ENCODE measurements at regions of chr10 and their contacts with region 1.

Region 1: DNA sequence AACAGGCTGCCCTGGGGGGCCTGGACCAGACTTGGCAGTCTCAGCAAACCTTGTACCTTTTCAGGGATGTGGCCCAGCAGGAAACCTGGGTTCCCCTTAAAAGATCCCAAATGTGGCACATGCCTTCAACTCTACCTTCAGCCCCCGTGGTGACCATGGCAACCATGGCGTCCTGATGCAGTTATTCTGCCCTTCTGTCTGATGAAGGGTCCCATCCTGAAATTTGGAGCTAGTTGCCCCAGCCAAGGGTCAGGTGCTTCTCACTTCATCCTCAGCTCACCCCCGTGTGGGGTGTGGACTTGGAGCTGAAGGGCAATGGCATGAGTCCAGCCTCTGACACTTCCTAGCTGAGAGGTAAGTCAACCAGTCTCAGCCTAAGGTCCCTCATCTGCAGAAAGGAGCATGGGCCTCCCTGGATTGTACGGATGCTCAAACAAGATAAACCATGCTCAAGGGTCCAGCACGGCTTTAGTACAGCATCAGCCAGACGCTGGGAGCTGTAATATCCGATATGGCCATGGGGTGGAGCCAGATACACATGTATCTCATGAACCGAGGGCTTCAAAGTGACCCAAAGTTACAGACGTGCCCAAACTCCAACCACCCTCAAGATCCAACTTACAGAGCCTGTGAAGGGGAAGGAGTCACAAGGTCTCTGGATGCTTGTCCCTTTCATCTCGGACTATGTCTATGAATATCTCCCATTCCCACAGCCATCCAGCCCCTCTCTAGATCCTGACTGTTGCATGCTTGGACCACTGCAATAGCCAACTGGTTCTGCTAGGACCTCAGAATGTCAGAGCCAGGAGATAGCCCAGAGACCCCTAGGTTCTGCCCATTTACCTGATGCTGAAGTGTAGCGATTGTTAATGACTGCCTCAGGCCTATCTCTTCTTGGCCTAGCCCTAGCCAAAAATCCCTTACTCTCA is 142.5 kb downstream of the SH3PXD2A start:
- DNase-seq: peak; percentile 53 to 98
- H3K4me3 ChIP-seq: no peak overlapping the region
- H3K27ac ChIP-seq: no peak overlapping the region
- H3K4me1 ChIP-seq: peaks cover 0 to 3% (median 1%) of the 10 kb centered on the region in 4 experiments; a peak in 2 of 7 replicates
- H3K27me3 ChIP-seq: no peaks in the 10 kb centered on the region
- CTCF ChIP-seq: peak; percentile 68 to 96 (median 93)
- EP300 ChIP-seq: no peak
- POLR2A ChIP-seq: no peak
- RAD21 ChIP-seq: peak; percentile 99

Region 2: GRCh38 chr10:103416436-103417147 is 296.2 kb before region 1 on chr10:
- CTCF ChIA-PET with region 1: no interaction called
- POLR2A ChIA-PET with region 1: no interaction called
- DNase-seq: no peak
- H3K4me3 ChIP-seq: no peak overlapping the region
- H3K27ac ChIP-seq: no peak overlapping the region
- H3K4me1 ChIP-seq: no peaks in the 10 kb centered on the region
- H3K27me3 ChIP-seq: no peaks in the 10 kb centered on the region
- CTCF ChIP-seq: peak in 2 of 3 experiments; percentile 27 to 44; a peak in 2 of 4 replicates
- EP300 ChIP-seq: no peak
- POLR2A ChIP-seq: no peak
- RAD21 ChIP-seq: peak; percentile 45 to 51

Region 3: GRCh38 chr10:103598654-103599115 is 114.1 kb before region 1 on chr10:
- CTCF ChIA-PET with region 1: interaction called, 21 read pairs
- POLR2A ChIA-PET with region 1: no interaction called
- DNase-seq: peak; percentile 31 to 81
- H3K4me3 ChIP-seq: no peak overlapping the region
- H3K27ac ChIP-seq: no peak overlapping the region
- H3K4me1 ChIP-seq: peaks cover 0 to 4% (median 1%) of the 10 kb centered on the region in 4 experiments; a peak in 3 of 7 replicates
- H3K27me3 ChIP-seq: no peaks in the 10 kb centered on the region; a peak in 2 of 7 replicates
- CTCF ChIP-seq: peak; percentile 88 to 90 (median 88)
- EP300 ChIP-seq: no peak
- POLR2A ChIP-seq: no peak
- RAD21 ChIP-seq: peak; percentile 91 to 92

Region 4: GRCh38 chr10:103727546-103727963 is 14.7 kb after region 1 on chr10:
- CTCF ChIA-PET with region 1: interaction called, 74 read pairs
- POLR2A ChIA-PET with region 1: interaction called, 3 read pairs
- DNase-seq: no peak
- H3K4me3 ChIP-seq: no peak overlapping the region
- H3K27ac ChIP-seq: no peak overlapping the region
- H3K4me1 ChIP-seq: peaks cover 0 to 14% (median 7%) of the 10 kb centered on the region in 4 experiments; a peak in 6 of 7 replicates
- H3K27me3 ChIP-seq: no peaks in the 10 kb centered on the region
- CTCF ChIP-seq: no peak
- EP300 ChIP-seq: no peak
- POLR2A ChIP-seq: no peak
- RAD21 ChIP-seq: no peak

Region 5: DNA sequence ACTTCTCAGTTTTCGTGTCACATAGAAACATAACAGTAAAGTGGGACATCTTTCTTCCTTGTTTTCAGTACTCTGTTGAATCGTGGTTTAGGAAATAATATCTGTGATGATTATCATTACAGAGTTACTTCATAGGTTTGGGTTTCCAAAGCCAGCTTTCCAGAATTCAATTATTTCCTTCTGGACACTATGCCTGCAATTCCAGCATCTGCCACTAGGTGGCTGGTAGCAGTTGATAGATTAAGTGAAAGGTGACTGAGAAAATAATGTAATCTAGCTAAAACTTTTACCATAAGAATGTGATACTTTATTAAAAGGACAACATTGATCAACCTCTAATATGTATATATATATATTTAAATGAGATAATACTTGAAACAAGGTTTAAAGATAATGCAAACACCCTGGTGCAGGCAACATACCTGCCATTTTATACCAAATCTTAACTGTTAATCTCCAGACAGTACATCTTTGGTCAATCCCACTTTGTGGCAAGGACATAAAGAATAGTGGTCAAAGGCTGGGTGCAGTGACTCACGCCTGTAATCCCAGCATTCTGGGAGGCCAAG is 39.9 kb after region 1 on chr10:
- CTCF ChIA-PET with region 1: interaction called, 42 read pairs
- POLR2A ChIA-PET with region 1: no interaction called
- DNase-seq: peak in 1 of 2 experiments; percentile 76
- H3K4me3 ChIP-seq: no peak overlapping the region
- H3K27ac ChIP-seq: no peak overlapping the region
- H3K4me1 ChIP-seq: peaks cover 4 to 11% (median 7%) of the 10 kb centered on the region in 4 experiments
- H3K27me3 ChIP-seq: no peaks in the 10 kb centered on the region
- CTCF ChIP-seq: peak in 2 of 3 experiments; percentile 46 to 73; a peak in 2 of 4 replicates
- EP300 ChIP-seq: no peak
- POLR2A ChIP-seq: no peak
- RAD21 ChIP-seq: peak; percentile 23 to 43; a peak in 2 of 4 replicates

Region 6: GRCh38 chr10:103789771-103790201 is 77.0 kb after region 1 on chr10:
- CTCF ChIA-PET with region 1: interaction called, 20 read pairs
- POLR2A ChIA-PET with region 1: no interaction called
- DNase-seq: no peak
- H3K4me3 ChIP-seq: no peak overlapping the region
- H3K27ac ChIP-seq: no peak overlapping the region
- H3K4me1 ChIP-seq: no peaks in the 10 kb centered on the region; a peak in 2 of 7 replicates
- H3K27me3 ChIP-seq: no peaks in the 10 kb centered on the region
- CTCF ChIP-seq: no peak
- EP300 ChIP-seq: no peak
- POLR2A ChIP-seq: no peak
- RAD21 ChIP-seq: no peak

Region 7: GRCh38 chr10:103845972-103846371 is 133.1 kb after region 1 on chr10:
- CTCF ChIA-PET with region 1: interaction called, 199 read pairs
- POLR2A ChIA-PET with region 1: no interaction called
- DNase-seq: no peak
- H3K4me3 ChIP-seq: no peak overlapping the region
- H3K27ac ChIP-seq: no peak overlapping the region
- H3K4me1 ChIP-seq: peaks cover 6 to 9% (median 7%) of the 10 kb centered on the region in 4 experiments; a peak in 6 of 7 replicates
- H3K27me3 ChIP-seq: no peaks in the 10 kb centered on the region
- CTCF ChIP-seq: no peak
- EP300 ChIP-seq: no peak
- POLR2A ChIP-seq: no peak
- RAD21 ChIP-seq: no peak

Region 8: DNA sequence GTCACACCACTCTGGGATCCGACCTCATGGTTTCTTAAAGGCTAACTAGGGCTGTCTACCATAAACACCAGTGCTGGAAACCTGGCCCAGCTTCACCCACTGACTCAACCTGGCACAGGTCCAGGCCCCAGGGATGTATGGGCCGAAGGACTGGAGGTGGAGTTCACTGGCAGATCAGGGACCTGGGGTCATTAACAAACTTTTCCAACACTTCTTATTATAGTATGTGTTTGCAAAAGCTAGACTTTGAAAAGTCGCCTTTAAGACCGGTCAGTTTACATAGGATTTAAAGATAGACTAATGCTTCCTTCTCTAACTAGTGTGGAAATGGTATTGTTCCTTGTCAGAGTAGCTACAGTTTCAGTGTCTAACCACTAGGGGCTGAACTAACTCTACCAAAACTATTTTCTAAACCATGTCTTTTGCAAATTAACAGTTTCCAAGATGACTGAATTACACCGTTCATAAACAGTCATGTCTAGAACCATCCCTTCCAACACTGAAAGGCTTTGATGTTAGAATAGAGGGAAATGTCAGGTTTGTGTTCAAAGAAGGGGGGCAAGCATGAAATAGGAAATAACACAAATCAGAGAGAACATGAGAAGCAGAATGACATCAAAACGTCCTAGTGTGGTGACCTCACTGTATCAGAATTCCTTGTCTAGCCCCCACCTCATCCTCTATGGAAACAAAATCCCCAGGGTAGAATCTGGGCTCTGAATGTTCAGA is 175.4 kb after region 1 on chr10:
- CTCF ChIA-PET with region 1: interaction called, 193 read pairs
- POLR2A ChIA-PET with region 1: interaction called, 3 read pairs
- DNase-seq: no peak
- H3K4me3 ChIP-seq: no peak overlapping the region
- H3K27ac ChIP-seq: no peak overlapping the region
- H3K4me1 ChIP-seq: peaks cover 0 to 2% (median 0%) of the 10 kb centered on the region in 4 experiments; a peak in 1 of 7 replicates
- H3K27me3 ChIP-seq: no peaks in the 10 kb centered on the region
- CTCF ChIP-seq: peak in 2 of 3 experiments; percentile 49 to 85; a peak in 2 of 4 replicates
- EP300 ChIP-seq: no peak
- POLR2A ChIP-seq: no peak
- RAD21 ChIP-seq: peak; percentile 88 to 89

Region 9: DNA sequence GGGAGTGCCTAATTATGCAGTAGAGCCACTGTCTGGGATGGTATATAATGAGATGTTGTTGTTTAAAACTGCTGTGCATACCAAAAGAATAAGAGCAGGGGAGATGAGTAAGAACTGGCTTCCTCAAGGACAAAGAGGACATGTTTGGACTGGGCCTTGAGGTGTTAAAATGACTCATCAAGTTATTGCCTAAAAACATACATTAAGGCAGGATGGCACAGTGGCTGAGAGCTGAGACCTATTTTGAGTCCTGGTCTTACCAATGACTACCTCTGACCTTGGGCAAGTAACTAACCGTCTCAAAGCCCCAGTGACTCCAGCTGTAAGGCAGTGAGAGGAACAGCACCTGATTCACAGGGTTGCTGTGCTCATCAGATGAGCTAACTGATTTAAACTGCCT is 711.9 kb after region 1 on chr10:
- CTCF ChIA-PET with region 1: no interaction called
- POLR2A ChIA-PET with region 1: no interaction called
- DNase-seq: no peak
- H3K4me3 ChIP-seq: no peak overlapping the region
- H3K27ac ChIP-seq: no peak overlapping the region
- H3K4me1 ChIP-seq: peaks cover 0 to 6% (median 2%) of the 10 kb centered on the region in 4 experiments; a peak in 4 of 7 replicates
- H3K27me3 ChIP-seq: no peaks in the 10 kb centered on the region
- CTCF ChIP-seq: no peak
- EP300 ChIP-seq: no peak
- POLR2A ChIP-seq: no peak
- RAD21 ChIP-seq: no peak

Measured in H1 (cell line).